Cardiac septum (tissue), 1 donor: ENCODE measurements at regions of chr21 and their contacts with region 1.

Region 1: GRCh38 chr21:36859744-36860501 is 106.5 kb downstream of the HLCS start:
- DNase-seq: peak; percentile 90

Region 2: GRCh38 chr21:36747815-36748383 is 112.0 kb before region 1 on chr21:
- intact Hi-C with region 1: loop called (anchors 5 kb)
- DNase-seq: no peak

Region 3: GRCh38 chr21:36889401-36889800 is 29.5 kb after region 1 on chr21:
- intact Hi-C with region 1: loop called (anchors 2 kb)
- DNase-seq: no peak

Region 4: GRCh38 chr21:36917471-36918158 is 57.7 kb after region 1 on chr21:
- intact Hi-C with region 1: loop called (anchors 5 kb)
- DNase-seq: no peak